ENCODE measurements at regions of chr9 and their contacts with region 1.

Region 1: GRCh38 chr9:99104459-99105151 is at the start of gene TGFBR1:
- DNase-seq: peak; percentile 90 to 94 (median 92)
- H3K4me3 ChIP-seq: peak within 1 kb of the TSS; percentile 66
- H3K4me3 Mint-ChIP-seq: peak within 1 kb of the TSS; percentile 85 to 94 (median 93)
- H3K27ac ChIP-seq: peak within 1 kb of the TSS; percentile 64
- H3K27ac Mint-ChIP-seq: peak within 1 kb of the TSS; percentile 79 to 99 (median 92)
- H3K4me1 ChIP-seq: peaks cover 45% of the 10 kb centered on the region
- H3K4me1 Mint-ChIP-seq: peaks cover 71 to 75% (median 74%) of the 10 kb centered on the region in 3 donors
- H3K27me3 ChIP-seq: no peaks in the 10 kb centered on the region
- H3K27me3 Mint-ChIP-seq: no peaks in the 10 kb centered on the region
- total RNA-seq, gene TGFBR1: 36.6 to 41.9 TPM

Region 2: GRCh38 chr9:98998441-98999151 is 106.0 kb before region 1 on chr9:
- CTCF ChIA-PET with region 1: interaction called, 19 read pairs
- POLR2A ChIA-PET with region 1: no interaction called
- DNase-seq: peak; percentile 29 to 67 (median 45)
- H3K4me3 ChIP-seq: no peak overlapping the region
- H3K4me3 Mint-ChIP-seq: no peak overlapping the region
- H3K27ac ChIP-seq: no peak overlapping the region
- H3K27ac Mint-ChIP-seq: peak overlapping the region in 1 of 8 donors; percentile 63
- H3K4me1 ChIP-seq: peaks cover 19% of the 10 kb centered on the region
- H3K4me1 Mint-ChIP-seq: peaks cover 13 to 24% (median 23%) of the 10 kb centered on the region in 3 donors
- H3K27me3 ChIP-seq: no peaks in the 10 kb centered on the region
- H3K27me3 Mint-ChIP-seq: peaks cover 15 to 19% of the 10 kb centered on the region in 2 donors

Region 3: DNA sequence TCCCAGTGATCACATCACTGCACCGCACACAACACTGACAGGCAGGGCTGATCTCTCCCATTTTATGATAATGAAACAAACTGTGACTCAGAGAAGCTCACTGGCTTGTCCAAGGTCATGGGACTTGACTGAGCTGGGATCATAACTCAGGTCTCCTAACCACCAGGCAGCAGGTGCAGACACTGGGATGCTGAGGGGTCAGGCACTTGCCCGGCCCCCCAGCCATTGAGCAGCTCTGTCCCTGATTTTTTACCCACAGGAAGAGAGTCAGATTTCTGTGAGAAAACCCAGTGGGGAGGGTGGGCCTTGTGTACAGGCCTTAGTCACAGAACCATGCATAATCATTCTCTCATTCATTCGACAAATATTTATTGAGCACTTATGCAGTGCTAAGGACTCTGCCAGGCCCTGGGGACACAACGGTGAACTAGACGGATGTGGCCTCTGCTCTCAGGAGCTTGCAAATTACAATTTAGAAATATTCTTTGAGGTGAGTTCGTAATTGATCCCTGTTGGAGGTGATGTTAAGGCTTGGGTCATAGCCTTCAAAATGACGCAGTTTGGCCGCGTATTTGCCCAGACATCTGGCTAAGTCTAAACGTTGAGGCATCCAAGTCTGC is 54.2 kb before region 1 on chr9:
- CTCF ChIA-PET with region 1: interaction called, 12 read pairs
- POLR2A ChIA-PET with region 1: interaction called, 4 read pairs
- DNase-seq: no peak
- H3K4me3 ChIP-seq: no peak overlapping the region
- H3K4me3 Mint-ChIP-seq: no peak overlapping the region
- H3K27ac ChIP-seq: no peak overlapping the region
- H3K27ac Mint-ChIP-seq: no peak overlapping the region
- H3K4me1 ChIP-seq: peaks cover 50% of the 10 kb centered on the region
- H3K4me1 Mint-ChIP-seq: peaks cover 65 to 79% (median 67%) of the 10 kb centered on the region in 3 donors
- H3K27me3 ChIP-seq: no peaks in the 10 kb centered on the region
- H3K27me3 Mint-ChIP-seq: no peaks in the 10 kb centered on the region

Region 4: DNA sequence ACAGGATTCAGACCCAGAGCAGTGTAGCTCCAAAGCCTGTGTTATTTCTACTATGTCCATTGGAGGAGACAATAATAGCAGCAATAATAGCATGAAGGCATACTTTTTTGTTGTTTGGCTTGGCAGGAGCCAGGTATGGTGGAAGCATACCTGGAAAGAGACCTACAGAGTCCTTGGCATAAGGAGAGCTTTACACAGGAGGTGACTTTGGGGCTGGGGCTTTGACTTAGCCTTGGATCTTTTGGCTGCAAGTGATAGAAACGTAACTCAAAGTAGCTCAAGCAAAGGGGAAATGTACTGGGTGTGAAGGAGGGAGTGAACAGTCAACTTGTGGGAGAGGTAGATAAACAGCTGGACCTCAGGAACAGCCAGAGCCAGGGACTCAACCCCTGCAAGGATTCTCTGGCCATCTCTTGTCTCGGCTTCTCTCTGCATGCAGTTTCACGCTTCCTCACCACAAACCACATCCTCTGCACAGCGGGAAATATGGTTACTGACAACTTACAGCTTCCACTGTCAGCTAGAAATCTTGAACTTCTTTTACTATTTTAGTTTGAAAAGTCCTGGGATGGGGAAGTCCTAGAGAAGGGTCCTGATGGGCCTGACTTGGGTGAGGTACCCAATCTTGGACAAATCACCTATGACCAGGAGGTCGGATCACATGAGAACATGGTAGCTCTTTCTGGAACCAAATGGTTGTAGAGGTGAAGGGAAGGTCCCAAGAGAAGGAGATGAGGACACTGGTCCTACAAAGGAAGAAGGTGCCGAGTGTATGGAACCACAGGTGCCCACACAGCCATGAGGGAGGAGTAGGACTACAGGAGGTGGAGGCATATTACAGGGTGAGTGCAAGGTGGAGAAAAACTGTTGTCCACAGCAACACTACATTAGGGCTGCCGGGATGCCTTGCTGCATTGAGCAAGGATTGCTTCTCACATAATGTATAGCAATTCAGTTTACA is 46.7 kb before region 1 on chr9:
- CTCF ChIA-PET with region 1: interaction called, 12 read pairs
- POLR2A ChIA-PET with region 1: interaction called, 13 read pairs
- DNase-seq: peak; percentile 56 to 88 (median 80)
- H3K4me3 ChIP-seq: peak overlapping the region; percentile 80
- H3K4me3 Mint-ChIP-seq: peak overlapping the region; percentile 83 to 93 (median 90)
- H3K27ac ChIP-seq: peak overlapping the region; percentile 51
- H3K27ac Mint-ChIP-seq: peak overlapping the region; percentile 21 to 92 (median 85)
- H3K4me1 ChIP-seq: peaks cover 71% of the 10 kb centered on the region
- H3K4me1 Mint-ChIP-seq: peaks cover 86 to 94% (median 94%) of the 10 kb centered on the region in 3 donors
- H3K27me3 ChIP-seq: no peaks in the 10 kb centered on the region
- H3K27me3 Mint-ChIP-seq: no peaks in the 10 kb centered on the region

Region 5: GRCh38 chr9:99118782-99119466 is 14.3 kb after region 1 on chr9:
- CTCF ChIA-PET with region 1: interaction called, 14 read pairs
- POLR2A ChIA-PET with region 1: interaction called, 29 read pairs
- DNase-seq: peak in 4 of 5 donors; percentile 30 to 75 (median 71)
- H3K4me3 ChIP-seq: peak overlapping the region; percentile 42
- H3K4me3 Mint-ChIP-seq: peak overlapping the region; percentile 3 to 92 (median 81)
- H3K27ac ChIP-seq: no peak overlapping the region
- H3K27ac Mint-ChIP-seq: peak overlapping the region; percentile 21 to 96 (median 91)
- H3K4me1 ChIP-seq: peaks cover 89% of the 10 kb centered on the region
- H3K4me1 Mint-ChIP-seq: peaks cover 90 to 95% (median 95%) of the 10 kb centered on the region in 3 donors
- H3K27me3 ChIP-seq: no peaks in the 10 kb centered on the region
- H3K27me3 Mint-ChIP-seq: no peaks in the 10 kb centered on the region

Region 6: DNA sequence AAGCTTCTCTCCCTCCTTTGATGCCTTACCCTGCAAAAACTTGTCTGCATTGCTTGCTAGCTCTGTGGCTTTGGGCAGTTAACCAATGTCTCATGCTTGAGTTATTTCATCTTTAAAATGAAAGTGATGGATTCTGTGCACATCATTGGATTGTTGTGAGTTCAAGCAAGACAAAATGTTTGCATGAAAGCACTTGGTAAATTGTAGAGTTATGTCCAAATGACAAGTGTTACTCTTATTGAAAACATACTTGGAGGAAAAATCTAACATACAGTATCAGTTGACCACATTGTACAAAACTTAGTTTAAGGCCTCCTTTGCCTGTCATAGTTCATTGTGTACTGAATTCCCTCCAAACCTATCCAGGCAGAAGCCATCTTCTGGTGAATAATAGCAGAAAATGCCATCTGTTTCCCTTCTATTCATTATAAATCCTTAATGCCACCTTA is 30.3 kb after region 1 on chr9:
- CTCF ChIA-PET with region 1: interaction called, 39 read pairs
- POLR2A ChIA-PET with region 1: interaction called, 5 read pairs
- DNase-seq: peak in 1 of 5 donors; percentile 64
- H3K4me3 ChIP-seq: peak overlapping the region; percentile 22
- H3K4me3 Mint-ChIP-seq: peak overlapping the region in 6 of 7 donors; percentile 20 to 69 (median 40)
- H3K27ac ChIP-seq: no peak overlapping the region
- H3K27ac Mint-ChIP-seq: peak overlapping the region in 6 of 8 donors; percentile 6 to 90 (median 72)
- H3K4me1 ChIP-seq: peaks cover 59% of the 10 kb centered on the region
- H3K4me1 Mint-ChIP-seq: peaks cover 70 to 89% (median 81%) of the 10 kb centered on the region in 3 donors
- H3K27me3 ChIP-seq: no peaks in the 10 kb centered on the region
- H3K27me3 Mint-ChIP-seq: no peaks in the 10 kb centered on the region